ENCODE measurements at regions of chr6 and their contacts with region 1.

Region 1: GRCh38 chr6:31652925-31653718 is 661 bp upstream of the BAG6 start:
- DNase-seq: no peak
- H3K4me3 Mint-ChIP-seq: peak overlapping the region; percentile 100
- H3K27ac Mint-ChIP-seq: peak overlapping the region; percentile 98
- H3K4me1 Mint-ChIP-seq: peaks cover 36% of the 10 kb centered on the region
- H3K27me3 Mint-ChIP-seq: no peaks in the 10 kb centered on the region
- CTCF ChIP-seq: no peak

Region 2: DNA sequence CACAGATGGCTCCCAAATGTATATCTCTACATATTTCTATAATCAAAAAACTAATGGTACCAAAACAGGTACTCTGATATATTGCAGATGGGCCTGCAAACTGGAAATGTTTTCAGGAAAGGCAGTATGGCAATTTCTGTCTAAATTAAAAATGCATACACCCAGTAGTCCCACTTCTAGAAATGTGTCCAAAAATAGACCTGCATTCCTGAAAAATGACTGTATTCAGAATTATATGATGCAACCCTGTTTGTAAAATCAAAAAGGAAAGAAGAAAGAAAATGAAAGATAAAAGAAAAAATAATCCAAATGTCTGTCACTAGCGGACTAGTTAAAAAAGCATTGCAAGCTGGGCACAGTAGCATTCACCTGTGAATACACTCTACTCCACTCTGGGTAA is 168.1 kb before region 1 on chr6:
- CTCF ChIA-PET with region 1: no interaction called
- POLR2A ChIA-PET with region 1: no interaction called
- intact Hi-C with region 1: no loop called
- DNase-seq: no peak
- H3K4me3 Mint-ChIP-seq: no peak overlapping the region
- H3K27ac Mint-ChIP-seq: no peak overlapping the region
- H3K4me1 Mint-ChIP-seq: peaks cover 24% of the 10 kb centered on the region
- H3K27me3 Mint-ChIP-seq: no peaks in the 10 kb centered on the region
- CTCF ChIP-seq: no peak

Region 3: GRCh38 chr6:31546962-31547726 is 106.0 kb before region 1 on chr6 and contains the start of gene NFKBIL1:
- CTCF ChIA-PET with region 1: interaction called, 5 read pairs
- POLR2A ChIA-PET with region 1: interaction called, 59 read pairs
- intact Hi-C with region 1: loop called (anchors 2 kb)
- DNase-seq: peak; percentile 96
- H3K4me3 Mint-ChIP-seq: peak within 1 kb of the TSS; percentile 75
- H3K27ac Mint-ChIP-seq: peak within 1 kb of the TSS; percentile 57
- H3K4me1 Mint-ChIP-seq: peaks cover 18% of the 10 kb centered on the region
- H3K27me3 Mint-ChIP-seq: no peaks in the 10 kb centered on the region
- CTCF ChIP-seq: no peak
- total RNA-seq, gene NFKBIL1: 25.2 and 30.3 TPM in 2 replicates

Region 4: GRCh38 chr6:31639449-31639861 is 13.7 kb before region 1 on chr6:
- CTCF ChIA-PET with region 1: no interaction called
- POLR2A ChIA-PET with region 1: interaction called, 59 read pairs
- intact Hi-C with region 1: no loop called
- DNase-seq: no peak
- H3K4me3 Mint-ChIP-seq: no peak overlapping the region
- H3K27ac Mint-ChIP-seq: no peak overlapping the region
- H3K4me1 Mint-ChIP-seq: no peaks in the 10 kb centered on the region
- H3K27me3 Mint-ChIP-seq: no peaks in the 10 kb centered on the region
- CTCF ChIP-seq: no peak

Region 5: DNA sequence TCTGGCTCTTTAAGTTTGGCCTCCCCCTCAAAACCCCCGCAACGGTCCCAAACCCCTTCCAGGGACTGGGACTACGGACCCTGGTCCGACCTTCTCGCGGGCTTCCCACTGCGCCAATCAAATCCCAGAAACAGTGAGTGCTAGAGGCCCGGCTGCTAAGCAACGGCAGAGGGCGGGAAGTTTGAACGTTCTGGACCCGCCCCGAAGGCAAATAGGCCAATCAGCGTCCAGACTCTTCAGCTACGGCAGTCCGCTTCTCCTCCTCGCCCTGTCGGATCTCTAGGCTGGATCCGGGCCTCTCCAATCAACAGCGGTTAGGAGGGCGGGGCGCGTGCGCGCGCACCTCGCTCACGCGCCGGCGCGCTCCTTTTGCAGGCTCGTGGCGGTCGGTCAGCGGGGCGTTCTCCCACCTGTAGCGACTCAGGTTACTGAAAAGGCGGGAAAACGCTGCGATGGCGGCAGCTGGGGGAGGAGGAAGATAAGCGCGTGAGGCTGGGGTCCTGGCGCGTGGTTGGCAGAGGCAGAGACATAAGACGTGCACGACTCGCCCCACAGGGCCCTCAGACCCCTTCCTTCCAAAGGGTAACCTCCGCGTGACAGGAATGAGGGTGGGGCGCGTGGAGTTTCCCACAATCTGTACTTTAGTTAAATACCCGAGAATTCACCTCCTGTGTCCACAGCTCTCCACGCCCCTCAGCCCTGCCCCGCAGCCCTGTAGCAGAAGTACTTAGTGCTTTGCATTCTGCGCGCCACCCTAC is 86.7 kb after region 1 on chr6 and contains the start of gene MSH5:
- CTCF ChIA-PET with region 1: no interaction called
- POLR2A ChIA-PET with region 1: interaction called, 10 read pairs
- intact Hi-C with region 1: no loop called
- DNase-seq: peak; percentile 99
- H3K4me3 Mint-ChIP-seq: peak within 1 kb of the TSS; percentile 88
- H3K27ac Mint-ChIP-seq: peak within 1 kb of the TSS; percentile 81
- H3K4me1 Mint-ChIP-seq: peaks cover 40% of the 10 kb centered on the region
- H3K27me3 Mint-ChIP-seq: no peaks in the 10 kb centered on the region
- CTCF ChIP-seq: no peak
- total RNA-seq, gene MSH5: 36.6 and 43.1 TPM in 2 replicates

Region 6: DNA sequence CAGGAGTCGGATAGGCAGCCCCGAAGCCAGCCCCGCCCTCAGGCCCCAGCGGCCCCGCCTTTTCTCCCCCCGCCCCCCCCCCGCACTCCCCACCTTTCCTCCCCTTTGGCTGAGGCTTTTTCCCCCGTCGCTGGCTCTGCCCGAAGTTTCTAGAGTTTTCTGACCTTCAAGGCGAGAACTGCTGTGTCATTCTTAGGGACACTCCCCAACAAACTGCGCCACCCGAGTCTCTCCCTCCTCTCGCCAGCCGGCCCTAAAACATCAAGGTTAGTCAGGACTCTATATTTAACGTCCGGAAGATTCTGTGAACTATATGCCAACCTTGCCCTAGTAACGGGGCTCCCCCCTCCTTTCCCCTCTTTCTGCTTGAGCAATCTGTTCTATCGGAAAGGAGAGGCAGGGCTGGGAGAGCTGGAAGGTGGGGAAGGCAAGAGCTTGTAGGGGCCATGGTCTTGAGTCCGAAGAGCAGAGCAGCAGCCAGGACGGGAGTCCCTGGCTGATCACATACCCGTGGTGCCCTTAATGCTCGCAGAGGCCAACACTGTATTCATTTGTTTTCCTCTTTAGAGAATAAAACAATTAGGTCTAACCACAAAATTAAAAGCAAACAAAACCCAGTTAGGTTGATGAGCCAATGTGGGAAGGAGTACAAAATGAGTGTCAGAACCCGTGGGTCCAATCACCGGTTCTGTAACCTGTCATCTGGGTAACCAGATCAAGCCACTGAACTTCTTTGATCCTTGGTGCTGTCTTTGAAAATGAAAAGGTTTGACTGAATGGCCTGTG is 169.1 kb after region 1 on chr6:
- CTCF ChIA-PET with region 1: no interaction called
- POLR2A ChIA-PET with region 1: interaction called, 35 read pairs
- intact Hi-C with region 1: no loop called
- DNase-seq: peak; percentile 94
- H3K4me3 Mint-ChIP-seq: peak overlapping the region; percentile 91
- H3K27ac Mint-ChIP-seq: peak overlapping the region; percentile 99
- H3K4me1 Mint-ChIP-seq: peaks cover 29% of the 10 kb centered on the region
- H3K27me3 Mint-ChIP-seq: no peaks in the 10 kb centered on the region
- CTCF ChIP-seq: no peak

Region 7: DNA sequence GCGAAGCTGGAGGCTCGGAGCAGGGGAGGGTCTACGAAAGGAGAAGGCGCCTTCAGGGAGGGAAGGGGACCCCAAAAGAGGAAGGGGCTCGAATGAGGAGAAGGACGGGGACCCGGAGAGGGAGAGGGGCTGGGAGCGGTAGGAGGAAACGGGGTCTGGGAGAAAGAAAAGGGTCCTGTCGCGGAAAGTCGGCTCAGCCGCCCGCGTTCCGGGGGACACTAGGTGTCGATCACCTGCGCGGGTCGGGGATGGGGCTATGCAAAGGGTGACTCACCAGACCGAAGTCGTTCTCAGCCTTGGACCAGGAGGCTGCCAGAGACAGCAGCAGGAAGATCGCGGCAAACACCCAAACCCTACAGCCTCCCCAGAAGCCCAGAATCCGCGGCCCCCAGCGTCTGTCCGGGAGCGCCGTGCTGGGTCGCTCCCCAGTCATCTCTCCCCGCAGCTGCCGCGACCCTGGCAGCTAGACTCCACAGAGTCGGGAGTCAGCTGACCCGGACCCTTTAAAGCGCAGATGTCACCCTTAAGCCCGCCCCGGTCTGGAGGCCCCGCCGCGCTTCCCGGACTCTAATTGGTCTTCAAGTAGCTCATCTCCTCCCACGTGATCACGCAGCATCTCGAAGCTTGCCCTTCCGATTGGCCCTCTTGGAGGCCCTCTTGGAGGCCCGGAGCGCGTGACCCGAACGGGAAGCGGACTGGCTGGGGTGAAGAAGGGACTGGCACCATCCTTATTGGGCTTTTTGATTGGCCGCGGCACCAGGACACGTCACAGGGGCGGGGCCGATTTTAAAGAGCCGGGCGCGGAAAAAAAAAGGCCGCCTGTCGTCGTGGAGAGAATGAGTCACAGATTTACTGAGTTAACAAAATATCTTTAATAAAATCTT is 209.5 kb after region 1 on chr6 and contains the start of gene NEU1:
- CTCF ChIA-PET with region 1: no interaction called
- POLR2A ChIA-PET with region 1: interaction called, 19 read pairs
- intact Hi-C with region 1: no loop called
- DNase-seq: peak; percentile 100
- H3K4me3 Mint-ChIP-seq: peak within 1 kb of the TSS; percentile 89
- H3K27ac Mint-ChIP-seq: peak within 1 kb of the TSS; percentile 66
- H3K4me1 Mint-ChIP-seq: peaks cover 10% of the 10 kb centered on the region
- H3K27me3 Mint-ChIP-seq: no peaks in the 10 kb centered on the region
- CTCF ChIP-seq: no peak
- total RNA-seq, gene NEU1: 19.7 and 43.8 TPM in 2 replicates

Region 8: GRCh38 chr6:32195652-32195901 is 542.5 kb after region 1 on chr6:
- CTCF ChIA-PET with region 1: no interaction called
- POLR2A ChIA-PET with region 1: interaction called, 12 read pairs
- intact Hi-C with region 1: no loop called
- DNase-seq: peak; percentile 99
- H3K4me3 Mint-ChIP-seq: peak overlapping the region; percentile 93
- H3K27ac Mint-ChIP-seq: peak overlapping the region; percentile 98
- H3K4me1 Mint-ChIP-seq: peaks cover 12% of the 10 kb centered on the region
- H3K27me3 Mint-ChIP-seq: no peaks in the 10 kb centered on the region
- CTCF ChIP-seq: no peak

Region 9: DNA sequence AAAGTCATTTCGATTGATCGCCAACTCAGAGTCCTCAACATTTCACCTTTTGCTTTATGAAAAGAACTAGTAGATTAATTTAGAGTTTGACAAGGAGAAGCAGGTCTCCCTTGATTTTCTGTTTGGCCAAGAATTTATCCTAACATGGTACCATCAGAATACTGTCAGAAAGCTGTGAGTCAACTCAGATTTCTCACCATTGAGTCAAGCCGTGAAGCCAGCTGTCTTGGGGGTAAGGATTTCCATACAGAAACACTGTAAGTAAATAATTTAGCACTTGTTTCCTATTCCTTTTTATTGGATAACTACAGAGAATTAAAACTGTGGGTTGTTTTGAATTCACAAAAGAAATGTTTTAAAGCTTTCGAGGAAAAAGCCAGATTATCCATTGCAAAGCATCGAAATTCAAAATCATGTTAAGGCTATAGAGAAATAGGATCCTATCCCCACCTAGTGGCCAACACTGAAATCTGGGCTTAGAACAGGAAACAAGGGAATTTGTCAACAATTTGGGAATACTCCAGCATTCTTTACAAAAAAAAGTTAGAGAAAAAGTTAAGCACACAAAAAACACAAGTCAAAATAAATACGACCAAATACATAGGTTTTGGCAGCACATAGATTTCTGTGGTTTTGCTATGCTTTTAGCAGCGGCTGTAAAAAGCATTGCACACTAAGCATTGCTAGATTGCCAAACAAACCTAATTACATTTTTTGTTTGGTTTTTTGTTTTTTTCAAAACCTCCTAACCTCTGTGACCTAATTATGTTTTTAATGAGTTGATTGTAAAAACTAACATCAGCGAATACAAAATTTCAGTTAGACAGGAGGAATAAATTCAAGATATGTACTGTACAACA is 1494.9 kb after region 1 on chr6:
- CTCF ChIA-PET with region 1: no interaction called
- POLR2A ChIA-PET with region 1: no interaction called
- intact Hi-C with region 1: no loop called
- DNase-seq: peak; percentile 58
- H3K4me3 Mint-ChIP-seq: no peak overlapping the region
- H3K27ac Mint-ChIP-seq: no peak overlapping the region
- H3K4me1 Mint-ChIP-seq: no peaks in the 10 kb centered on the region
- H3K27me3 Mint-ChIP-seq: peaks cover 29% of the 10 kb centered on the region
- CTCF ChIP-seq: peak; percentile 65

Measured in MCF 10A (cell line).